Naive thymus-derived CD8-positive, alpha-beta T cell (primary cell): ENCODE measurements at regions of chr2 and their contacts with region 1.

Region 1: GRCh38 chr2:42169100-42169873 is at the start of gene EML4:
- DNase-seq: peak; percentile 79 to 95 (median 90)
- ATAC-seq: peak; percentile 87
- H3K4me3 Mint-ChIP-seq: peak within 1 kb of the TSS in 2 of 10 donors; percentile 53 to 70
- H3K27ac Mint-ChIP-seq: peak within 1 kb of the TSS in 2 of 10 donors; percentile 91
- H3K4me1 Mint-ChIP-seq: peaks cover 7 to 24% (median 15%) of the 10 kb centered on the region in 4 donors
- H3K27me3 Mint-ChIP-seq: no peaks in the 10 kb centered on the region
- polyA plus RNA-seq, gene EML4: 37.8 to 48.1 (median 44.7) TPM

Region 2: GRCh38 chr2:42127425-42128424 is 41.6 kb before region 1 on chr2:
- POLR2A ChIA-PET with region 1: interaction called, 28 read pairs
- DNase-seq: peak in 5 of 10 donors; percentile 42 to 74 (median 73)
- ATAC-seq: peak; percentile 62 to 66
- H3K4me3 Mint-ChIP-seq: peak overlapping the region; percentile 43 to 88 (median 73)
- H3K27ac Mint-ChIP-seq: peak overlapping the region; percentile 91 to 96 (median 94)
- H3K4me1 Mint-ChIP-seq: peaks cover 50 to 96% (median 94%) of the 10 kb centered on the region in 4 donors
- H3K27me3 Mint-ChIP-seq: no peaks in the 10 kb centered on the region

Region 3: GRCh38 chr2:42191285-42192009 is 22.2 kb after region 1 on chr2:
- POLR2A ChIA-PET with region 1: no interaction called
- DNase-seq: no peak
- ATAC-seq: no peak
- H3K4me3 Mint-ChIP-seq: peak overlapping the region in 3 of 10 donors; percentile 10 to 57 (median 41)
- H3K27ac Mint-ChIP-seq: peak overlapping the region in 9 of 10 donors; percentile 25 to 85 (median 65)
- H3K4me1 Mint-ChIP-seq: peaks cover 32 to 87% (median 62%) of the 10 kb centered on the region in 4 donors
- H3K27me3 Mint-ChIP-seq: no peaks in the 10 kb centered on the region